ENCODE measurements at regions of chr22 and their contacts with region 1.

Region 1: GRCh38 chr22:36331306-36331911 is 56.4 kb downstream of the MYH9 start:
- DNase-seq: peak; percentile 87
- H3K4me3 Mint-ChIP-seq: peak overlapping the region; percentile 82
- H3K27ac Mint-ChIP-seq: peak overlapping the region; percentile 100
- H3K4me1 Mint-ChIP-seq: peaks cover 98% of the 10 kb centered on the region
- H3K27me3 Mint-ChIP-seq: no peaks in the 10 kb centered on the region

Region 2: DNA sequence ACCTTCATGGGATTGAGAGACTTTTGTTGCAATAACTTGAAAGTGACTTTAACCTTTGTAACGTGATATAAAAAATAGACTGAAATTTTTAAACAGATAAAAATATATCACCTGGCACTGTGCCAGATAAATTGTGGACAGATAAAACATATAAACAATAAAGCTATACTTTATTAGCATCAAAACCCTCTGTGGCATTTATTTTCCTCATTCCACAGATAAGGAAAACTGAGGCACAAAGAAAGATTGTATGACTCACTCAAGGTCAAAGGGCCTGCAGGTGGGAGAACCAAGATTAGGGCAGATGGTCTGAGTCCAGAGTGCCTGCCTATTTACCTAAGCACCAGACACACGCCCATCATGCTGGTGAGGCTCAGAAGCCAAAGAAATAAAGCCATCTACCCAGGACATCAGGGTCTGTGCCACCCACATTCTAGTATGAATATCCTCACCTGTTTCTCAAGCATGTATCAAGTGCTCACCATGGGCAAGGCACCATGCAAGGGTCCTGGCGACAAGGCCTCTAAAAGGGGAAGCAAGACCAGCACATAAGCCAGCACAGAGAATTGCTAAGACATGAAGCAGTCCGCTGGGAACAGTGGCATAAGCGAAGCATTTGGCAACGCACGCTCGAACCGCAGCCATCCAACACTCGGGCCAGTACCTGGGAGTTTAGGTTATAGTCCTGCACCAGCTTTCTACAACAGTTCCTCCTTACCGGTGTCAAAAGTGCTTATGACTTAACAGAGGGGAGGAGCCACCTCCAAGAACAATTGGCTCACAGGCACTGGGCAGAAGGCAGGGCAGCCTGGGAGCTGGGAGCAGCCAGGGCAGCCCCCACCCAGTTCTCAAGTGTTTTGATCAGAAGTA is 38.7 kb after region 1 on chr22:
- CTCF ChIA-PET with region 1: interaction called, 27 read pairs
- POLR2A ChIA-PET with region 1: interaction called, 355 read pairs
- DNase-seq: no peak
- H3K4me3 Mint-ChIP-seq: peak overlapping the region; percentile 74
- H3K27ac Mint-ChIP-seq: peak overlapping the region; percentile 92
- H3K4me1 Mint-ChIP-seq: peaks cover 97% of the 10 kb centered on the region
- H3K27me3 Mint-ChIP-seq: no peaks in the 10 kb centered on the region

Region 3: DNA sequence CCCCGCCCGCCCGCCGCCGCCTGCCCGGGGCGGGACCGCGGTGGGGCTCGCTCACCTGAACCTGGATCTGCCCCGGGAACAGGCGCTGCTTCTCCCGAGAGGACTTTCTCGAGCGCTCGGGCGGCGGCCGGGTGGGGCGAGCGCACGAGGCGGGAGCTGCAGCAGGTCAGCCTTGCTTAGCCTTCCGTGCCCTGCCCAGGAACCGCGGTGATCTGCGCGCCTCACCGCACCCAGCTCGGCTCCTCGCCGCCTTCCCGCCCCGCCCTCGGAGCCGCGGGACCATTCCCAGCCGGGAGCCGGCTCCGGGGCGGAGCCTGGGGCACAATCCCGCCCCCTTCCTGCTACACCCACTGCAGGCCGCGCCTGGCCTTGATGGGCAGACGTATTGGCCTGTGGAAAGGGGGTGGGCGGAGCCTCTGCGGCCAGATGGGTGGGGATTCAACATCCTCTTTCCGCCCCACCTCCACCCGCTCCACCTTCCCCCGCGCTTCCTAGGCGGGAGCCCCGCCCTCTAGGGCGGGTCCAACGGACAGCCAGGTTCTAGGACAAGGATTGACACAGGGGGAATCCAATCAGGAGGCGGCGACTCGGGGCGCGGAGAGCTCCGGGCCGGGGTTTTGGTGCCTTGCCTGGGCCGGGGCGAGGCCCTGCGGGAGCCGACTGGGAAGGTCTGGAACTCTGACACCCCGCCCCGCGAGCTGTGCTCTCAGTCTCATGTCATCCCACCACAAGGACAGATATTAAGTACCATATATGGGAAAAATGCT is 56.5 kb after region 1 on chr22 and contains the start of gene MYH9:
- CTCF ChIA-PET with region 1: interaction called, 9 read pairs
- POLR2A ChIA-PET with region 1: interaction called, 98 read pairs
- DNase-seq: peak; percentile 100
- H3K4me3 Mint-ChIP-seq: peak within 1 kb of the TSS; percentile 84
- H3K27ac Mint-ChIP-seq: peak within 1 kb of the TSS; percentile 95
- H3K4me1 Mint-ChIP-seq: peaks cover 46% of the 10 kb centered on the region
- H3K27me3 Mint-ChIP-seq: no peaks in the 10 kb centered on the region
- total RNA-seq, gene MYH9: 840 to 865 TPM

Region 4: DNA sequence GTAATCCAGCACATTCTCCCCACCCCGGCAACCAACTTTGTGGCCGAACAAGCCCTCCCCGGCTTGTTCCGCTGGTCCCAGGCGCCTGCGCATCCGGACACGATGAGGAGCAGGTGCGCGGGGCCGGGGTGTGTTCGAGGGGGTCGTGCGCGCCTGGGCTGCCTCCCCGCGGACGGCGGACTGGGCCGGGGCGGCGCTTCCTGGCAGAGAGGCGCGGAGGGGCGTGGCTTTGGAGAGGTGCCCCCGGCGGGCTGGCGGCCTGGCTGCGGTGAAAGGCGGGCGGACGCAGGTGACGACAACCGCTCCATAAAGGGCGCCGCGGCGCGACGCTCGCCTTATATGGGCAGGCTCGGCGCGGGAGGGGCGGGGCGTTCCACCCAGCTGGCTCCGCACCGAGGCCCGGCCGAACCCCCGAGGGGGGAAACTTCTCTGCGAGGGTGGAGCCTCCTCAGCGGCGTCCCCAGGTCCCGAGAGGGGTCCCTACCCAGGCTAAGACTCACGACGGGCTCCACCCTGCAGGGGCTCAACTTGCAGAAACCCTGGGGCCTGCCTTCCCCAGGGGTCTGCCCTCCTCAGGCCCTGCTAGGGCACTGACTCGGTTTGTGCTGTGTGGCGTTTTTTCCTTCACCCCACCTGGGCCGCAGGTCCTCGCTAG is 123.6 kb after region 1 on chr22:
- CTCF ChIA-PET with region 1: interaction called, 7 read pairs
- POLR2A ChIA-PET with region 1: interaction called, 27 read pairs
- DNase-seq: peak; percentile 97
- H3K4me3 Mint-ChIP-seq: peak overlapping the region; percentile 72
- H3K27ac Mint-ChIP-seq: peak overlapping the region; percentile 95
- H3K4me1 Mint-ChIP-seq: peaks cover 61% of the 10 kb centered on the region
- H3K27me3 Mint-ChIP-seq: no peaks in the 10 kb centered on the region

Measured in activated CD4-positive, alpha-beta memory T cell treated with anti-CD3 and anti-CD28 coated beads, Interleukin-2, amount 10 ng/mL, durations not matched to agents 7 days and 5 days (primary cell).